Psoas muscle (tissue), 8 donors: ENCODE measurements at regions of chr2 and their contacts with region 1.

Region 1: GRCh38 chr2:170815746-170816503 is 762 bp upstream of the GAD1 start:
- DNase-seq: peak; percentile 51 to 67
- ATAC-seq: peak; percentile 65 to 79 (median 74)
- H3K4me3 ChIP-seq: peak overlapping the region; percentile 66
- H3K27ac ChIP-seq: no peak overlapping the region
- H3K4me1 ChIP-seq: peaks cover 43% of the 10 kb centered on the region
- H3K27me3 ChIP-seq: peaks cover 3 to 84% (median 46%) of the 10 kb centered on the region in 3 donors
- CTCF ChIP-seq: peak; percentile 68

Region 2: GRCh38 chr2:170324640-170325046 is 491.3 kb before region 1 on chr2:
- intact Hi-C with region 1: loop called in 1 of 2 experiments (anchors 10 kb)
- DNase-seq: no peak
- ATAC-seq: peak in 1 of 4 donors; percentile 64
- H3K4me3 ChIP-seq: no peak overlapping the region
- H3K27ac ChIP-seq: no peak overlapping the region
- H3K4me1 ChIP-seq: no peaks in the 10 kb centered on the region
- H3K27me3 ChIP-seq: no peaks in the 10 kb centered on the region
- CTCF ChIP-seq: peak; percentile 52

Region 3: GRCh38 chr2:170369894-170370293 is 446.0 kb before region 1 on chr2:
- intact Hi-C with region 1: loop called in 1 of 2 experiments (anchors 5 kb)
- DNase-seq: no peak
- ATAC-seq: no peak
- H3K4me3 ChIP-seq: no peak overlapping the region
- H3K27ac ChIP-seq: no peak overlapping the region
- H3K4me1 ChIP-seq: no peaks in the 10 kb centered on the region
- H3K27me3 ChIP-seq: peaks cover 0 to 40% (median 6%) of the 10 kb centered on the region in 3 donors
- CTCF ChIP-seq: peak; percentile 24

Region 4: GRCh38 chr2:170486730-170487129 is 329.2 kb before region 1 on chr2:
- intact Hi-C with region 1: loop called (anchors 2 to 5 kb)
- DNase-seq: no peak
- ATAC-seq: peak in 2 of 4 donors; percentile 38 to 54
- H3K4me3 ChIP-seq: no peak overlapping the region
- H3K27ac ChIP-seq: no peak overlapping the region
- H3K4me1 ChIP-seq: no peaks in the 10 kb centered on the region
- H3K27me3 ChIP-seq: no peaks in the 10 kb centered on the region
- CTCF ChIP-seq: peak; percentile 32

Region 5: DNA sequence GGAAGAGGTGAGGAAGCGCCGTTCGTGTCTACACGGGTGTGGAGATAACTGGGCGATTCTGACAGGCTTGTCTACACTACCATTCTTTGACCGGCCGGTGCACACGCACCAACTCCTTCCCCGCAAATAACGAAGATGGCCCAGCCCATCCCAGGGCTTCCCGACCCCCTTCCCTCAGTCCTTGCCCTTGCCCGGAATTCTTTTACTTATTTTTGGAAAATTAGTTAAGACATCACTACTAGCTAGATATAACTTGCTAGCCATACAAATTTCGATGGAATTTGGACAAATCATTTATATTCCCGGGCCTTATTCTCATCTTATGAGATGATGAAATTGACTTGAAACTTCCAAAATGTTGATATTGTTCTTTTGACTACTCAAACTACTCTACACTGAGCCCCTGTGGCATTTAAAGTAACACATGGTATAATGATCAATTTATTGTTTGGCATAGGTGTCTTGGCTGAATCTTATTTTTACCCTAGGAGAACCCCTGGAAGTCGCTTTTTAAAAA is 44.4 kb before region 1 on chr2:
- intact Hi-C with region 1: no loop called
- DNase-seq: no peak
- ATAC-seq: no peak
- H3K4me3 ChIP-seq: peak overlapping the region; percentile 77
- H3K27ac ChIP-seq: peak overlapping the region; percentile 30
- H3K4me1 ChIP-seq: peaks cover 12% of the 10 kb centered on the region
- H3K27me3 ChIP-seq: no peaks in the 10 kb centered on the region
- CTCF ChIP-seq: no peak

Region 6: DNA sequence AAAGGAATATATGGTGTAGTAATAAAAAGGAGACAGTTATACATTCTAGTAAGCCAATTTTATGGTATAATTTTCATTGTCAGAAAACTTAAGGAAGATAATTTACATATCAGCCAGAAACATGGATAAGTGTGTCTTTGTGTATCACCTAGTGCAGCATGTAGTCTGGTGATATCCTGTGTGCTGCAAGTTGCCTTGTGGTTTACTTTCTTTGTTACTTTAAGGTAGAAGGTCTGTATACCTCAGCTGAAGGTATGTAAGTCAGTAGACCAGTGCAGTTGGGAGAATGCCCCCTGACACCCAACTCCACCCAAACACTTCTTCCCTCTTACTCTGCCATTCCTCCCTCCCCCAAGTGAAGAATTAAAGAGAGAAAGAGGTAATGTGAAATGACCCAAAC is 124.1 kb after region 1 on chr2:
- intact Hi-C with region 1: no loop called
- DNase-seq: no peak
- ATAC-seq: no peak
- H3K4me3 ChIP-seq: no peak overlapping the region
- H3K27ac ChIP-seq: no peak overlapping the region
- H3K4me1 ChIP-seq: peaks cover 7% of the 10 kb centered on the region
- H3K27me3 ChIP-seq: no peaks in the 10 kb centered on the region
- CTCF ChIP-seq: no peak

Region 7: DNA sequence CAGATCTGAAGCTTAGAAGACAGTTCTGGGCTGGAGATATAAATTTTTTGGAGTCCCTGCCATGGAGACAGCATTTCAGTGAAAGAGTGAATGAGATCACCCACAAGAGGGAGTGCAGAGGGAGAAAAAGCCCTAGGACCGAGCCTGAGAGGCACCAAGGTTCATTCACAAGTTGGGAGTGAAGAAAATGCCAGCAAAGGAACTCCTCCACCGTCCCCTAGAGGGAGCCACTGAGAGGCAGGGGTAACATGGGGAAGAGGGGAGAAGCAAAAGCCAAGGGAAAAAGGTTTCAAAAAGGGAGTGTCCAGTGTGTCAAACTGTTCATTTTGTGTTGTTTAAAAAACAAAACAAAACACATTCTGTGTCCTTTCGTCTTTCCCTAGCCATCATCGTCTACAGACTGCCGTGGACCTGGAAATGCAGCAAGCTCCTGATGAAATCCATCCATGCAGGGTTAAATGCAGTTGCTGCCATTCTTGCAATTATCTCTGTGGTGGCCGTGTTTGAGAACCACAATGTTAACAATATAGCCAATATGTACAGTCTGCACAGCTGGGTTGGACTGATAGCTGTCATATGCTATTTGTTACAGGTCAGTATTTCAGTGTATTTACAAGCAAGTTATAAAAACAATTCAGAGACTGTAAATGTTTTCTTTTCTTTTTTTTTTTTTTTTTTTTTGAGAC is 725.4 kb after region 1 on chr2:
- intact Hi-C with region 1: no loop called
- DNase-seq: no peak
- ATAC-seq: no peak
- H3K4me3 ChIP-seq: no peak overlapping the region
- H3K27ac ChIP-seq: no peak overlapping the region
- H3K4me1 ChIP-seq: no peaks in the 10 kb centered on the region
- H3K27me3 ChIP-seq: no peaks in the 10 kb centered on the region
- CTCF ChIP-seq: no peak